Endothelial cell of umbilical vein (primary cell): ENCODE measurements at regions of chr12 and their contacts with region 1.

Region 1: GRCh38 chr12:98644711-98645402 is at the starts of genes APAF1 and IKBIP:
- DNase-seq: peak; percentile 97
- H3K4me3 ChIP-seq: peak within 1 kb of the TSS; percentile 67 to 92 (median 87)
- H3K27ac ChIP-seq: peak within 1 kb of the TSS; percentile 67
- H3K4me1 ChIP-seq: peaks cover 11% of the 10 kb centered on the region
- H3K27me3 ChIP-seq: no peaks in the 10 kb centered on the region
- CTCF ChIP-seq: no peak
- POLR2A ChIP-seq: peak; percentile 65
- total RNA-seq, gene APAF1: 32.1 and 35.2 TPM in 2 replicates
- total RNA-seq, gene IKBIP: 56.2 and 56.8 TPM in 2 replicates

Region 2: GRCh38 chr12:98352218-98352811 is 292.5 kb before region 1 on chr12:
- CTCF ChIA-PET with region 1: no interaction called
- POLR2A ChIA-PET with region 1: no interaction called
- dilution Hi-C with region 1: no loop called
- intact Hi-C with region 1: no loop called
- DNase-seq: peak; percentile 84
- H3K4me3 ChIP-seq: no peak overlapping the region
- H3K27ac ChIP-seq: peak overlapping the region; percentile 69
- H3K4me1 ChIP-seq: peaks cover 15% of the 10 kb centered on the region
- H3K27me3 ChIP-seq: no peaks in the 10 kb centered on the region
- CTCF ChIP-seq: no peak
- POLR2A ChIP-seq: no peak

Region 3: GRCh38 chr12:98503592-98504367 is 141.1 kb before region 1 on chr12:
- CTCF ChIA-PET with region 1: no interaction called
- POLR2A ChIA-PET with region 1: no interaction called
- dilution Hi-C with region 1: no loop called
- intact Hi-C with region 1: loop called (anchors 1 kb)
- DNase-seq: peak; percentile 95
- H3K4me3 ChIP-seq: peak overlapping the region in 2 of 3 experiments; percentile 50 to 83
- H3K27ac ChIP-seq: peak overlapping the region; percentile 93
- H3K4me1 ChIP-seq: peaks cover 2% of the 10 kb centered on the region
- H3K27me3 ChIP-seq: no peaks in the 10 kb centered on the region
- CTCF ChIP-seq: no peak
- POLR2A ChIP-seq: peak; percentile 45

Region 4: GRCh38 chr12:98606357-98606988 is 38.4 kb before region 1 on chr12:
- CTCF ChIA-PET with region 1: interaction called, 4 read pairs
- POLR2A ChIA-PET with region 1: no interaction called
- dilution Hi-C with region 1: no loop called
- intact Hi-C with region 1: loop called (anchors 2 kb)
- DNase-seq: peak; percentile 16
- H3K4me3 ChIP-seq: no peak overlapping the region
- H3K27ac ChIP-seq: no peak overlapping the region
- H3K4me1 ChIP-seq: no peaks in the 10 kb centered on the region
- H3K27me3 ChIP-seq: no peaks in the 10 kb centered on the region
- CTCF ChIP-seq: no peak
- POLR2A ChIP-seq: no peak